Prostate gland (tissue), 2 donors: ENCODE measurements at regions of chr15 and their contacts with region 1.

Region 1: GRCh38 chr15:48250640-48251076 is 44.6 kb downstream of the SLC12A1 start:
- DNase-seq: peak; percentile 25
- H3K4me3 ChIP-seq: no peak overlapping the region
- H3K27ac ChIP-seq: no peak overlapping the region
- H3K4me1 ChIP-seq: no peaks in the 10 kb centered on the region
- H3K27me3 ChIP-seq: no peaks in the 10 kb centered on the region
- CTCF ChIP-seq: peak in 3 of 4 experiments; percentile 58 to 71 (median 66)
- POLR2A ChIP-seq: no peak

Region 2: GRCh38 chr15:48021336-48022086 is 229.1 kb before region 1 on chr15:
- intact Hi-C with region 1: loop called (anchors 10 kb)
- DNase-seq: no peak
- H3K4me3 ChIP-seq: no peak overlapping the region
- H3K27ac ChIP-seq: no peak overlapping the region
- H3K4me1 ChIP-seq: peaks cover 5% of the 10 kb centered on the region
- H3K27me3 ChIP-seq: no peaks in the 10 kb centered on the region
- CTCF ChIP-seq: no peak
- POLR2A ChIP-seq: no peak